Heart right ventricle (tissue), 16 donors: ENCODE measurements at regions of chr12 and their contacts with region 1.

Region 1: DNA sequence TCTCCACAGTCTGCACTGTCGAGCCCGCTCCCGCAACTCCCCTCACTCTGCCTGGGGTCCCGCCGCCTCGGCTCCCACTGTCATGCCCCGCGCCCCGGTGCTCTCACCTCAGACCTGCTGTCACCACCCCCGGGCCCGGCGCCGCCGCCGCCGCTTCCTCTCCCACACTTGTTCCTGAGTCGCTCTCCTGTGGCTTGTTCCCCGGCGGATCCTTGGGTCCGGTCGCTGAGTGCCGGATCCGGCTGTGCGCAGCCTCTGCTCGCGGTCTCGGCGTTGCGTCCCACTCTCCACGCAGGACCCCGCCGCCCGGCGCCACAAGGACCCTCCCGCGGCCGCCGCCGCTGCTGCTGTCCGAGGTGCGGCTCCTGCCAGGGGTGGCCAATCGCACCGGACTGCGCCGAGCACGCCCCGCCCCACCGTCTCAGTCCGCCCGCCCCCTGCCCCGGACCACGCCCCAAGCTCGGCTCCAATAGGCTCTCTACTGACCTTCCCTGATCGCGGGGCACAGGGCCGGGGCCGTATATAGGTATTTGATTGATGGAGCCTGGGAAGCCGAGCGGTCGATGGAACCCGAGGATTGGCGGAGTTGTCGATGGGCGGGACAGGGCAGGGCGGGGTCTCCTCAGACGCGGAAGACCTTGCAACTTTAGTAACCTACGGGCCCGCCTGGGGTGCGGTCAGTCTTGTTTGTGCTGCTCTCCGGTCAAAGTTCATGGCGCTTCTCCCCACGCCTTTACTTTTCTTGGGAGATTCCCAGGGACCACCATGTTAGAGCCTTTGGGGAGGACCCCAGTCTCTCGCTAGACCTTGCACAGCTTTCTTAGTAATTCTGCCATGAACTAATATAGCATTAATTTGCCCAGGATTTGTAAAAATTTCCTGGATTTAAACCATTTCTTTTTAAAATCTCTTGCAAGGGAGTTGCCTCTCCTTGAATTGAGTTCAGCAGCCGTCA is at the start of gene TAOK3:
- DNase-seq: peak; percentile 98 to 99
- ATAC-seq: peak; percentile 94 to 97 (median 96)
- H3K4me3 ChIP-seq: peak within 1 kb of the TSS; percentile 56 to 98 (median 94)
- H3K27ac ChIP-seq: peak within 1 kb of the TSS; percentile 65 to 100 (median 96)
- H3K4me1 ChIP-seq: peaks cover 0 to 65% (median 43%) of the 10 kb centered on the region in 9 donors
- H3K27me3 ChIP-seq: no peaks in the 10 kb centered on the region
- CTCF ChIP-seq: peak in 1 of 9 donors; percentile 14
- total RNA-seq, gene TAOK3: 13.2 to 29.8 (median 21.5) TPM

Region 2: GRCh38 chr12:118044075-118044474 is 328.7 kb before region 1 on chr12:
- intact Hi-C with region 1: loop called in 1 of 10 experiments (anchors 10 kb)
- DNase-seq: no peak
- ATAC-seq: no peak
- H3K4me3 ChIP-seq: no peak overlapping the region
- H3K27ac ChIP-seq: no peak overlapping the region
- H3K4me1 ChIP-seq: peaks cover 0 to 26% (median 0%) of the 10 kb centered on the region in 9 donors
- H3K27me3 ChIP-seq: no peaks in the 10 kb centered on the region
- CTCF ChIP-seq: no peak

Region 3: GRCh38 chr12:118120579-118121363 is 252.0 kb before region 1 on chr12:
- intact Hi-C with region 1: loop called in 7 of 10 experiments (anchors 1 to 5 kb)
- DNase-seq: peak; percentile 72 to 74
- ATAC-seq: peak; percentile 51 to 92 (median 88)
- H3K4me3 ChIP-seq: no peak overlapping the region
- H3K27ac ChIP-seq: peak overlapping the region in 9 of 10 donors; percentile 26 to 81 (median 70)
- H3K4me1 ChIP-seq: peaks cover 0 to 14% (median 5%) of the 10 kb centered on the region in 9 donors
- H3K27me3 ChIP-seq: no peaks in the 10 kb centered on the region
- CTCF ChIP-seq: peak; percentile 63 to 88 (median 78)

Region 4: DNA sequence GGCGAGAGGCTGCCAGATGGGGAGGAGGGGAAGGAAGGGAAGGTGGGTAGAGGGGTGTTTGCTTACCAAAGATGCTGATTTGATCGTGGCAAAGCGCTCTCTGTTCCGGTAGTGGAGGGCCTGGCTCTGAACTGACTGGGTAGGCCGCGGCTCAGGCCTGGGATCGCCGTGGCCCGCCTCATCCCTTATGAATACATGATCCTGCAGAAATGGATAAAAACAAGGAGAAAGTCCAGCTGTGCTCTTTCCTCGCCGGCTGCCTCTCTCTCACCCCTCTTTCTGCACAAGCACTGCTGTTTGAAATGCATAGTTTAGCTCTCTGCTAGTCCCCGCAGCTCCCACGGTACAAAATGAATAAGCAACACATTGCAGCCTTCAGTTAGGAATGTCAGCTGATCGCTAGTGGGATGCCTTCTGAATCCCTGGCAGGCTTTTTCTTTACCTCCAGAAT is 183.1 kb before region 1 on chr12:
- intact Hi-C with region 1: loop called in 5 of 10 experiments (anchors 1 to 10 kb)
- DNase-seq: peak; percentile 13 to 26
- ATAC-seq: peak; percentile 61 to 84 (median 79)
- H3K4me3 ChIP-seq: peak overlapping the region in 9 of 10 donors; percentile 26 to 52 (median 50)
- H3K27ac ChIP-seq: peak overlapping the region; percentile 32 to 79 (median 70)
- H3K4me1 ChIP-seq: peaks cover 0 to 52% (median 23%) of the 10 kb centered on the region in 9 donors
- H3K27me3 ChIP-seq: no peaks in the 10 kb centered on the region
- CTCF ChIP-seq: no peak